ENCODE measurements at regions of chr9 and their contacts with region 1.

Region 1: DNA sequence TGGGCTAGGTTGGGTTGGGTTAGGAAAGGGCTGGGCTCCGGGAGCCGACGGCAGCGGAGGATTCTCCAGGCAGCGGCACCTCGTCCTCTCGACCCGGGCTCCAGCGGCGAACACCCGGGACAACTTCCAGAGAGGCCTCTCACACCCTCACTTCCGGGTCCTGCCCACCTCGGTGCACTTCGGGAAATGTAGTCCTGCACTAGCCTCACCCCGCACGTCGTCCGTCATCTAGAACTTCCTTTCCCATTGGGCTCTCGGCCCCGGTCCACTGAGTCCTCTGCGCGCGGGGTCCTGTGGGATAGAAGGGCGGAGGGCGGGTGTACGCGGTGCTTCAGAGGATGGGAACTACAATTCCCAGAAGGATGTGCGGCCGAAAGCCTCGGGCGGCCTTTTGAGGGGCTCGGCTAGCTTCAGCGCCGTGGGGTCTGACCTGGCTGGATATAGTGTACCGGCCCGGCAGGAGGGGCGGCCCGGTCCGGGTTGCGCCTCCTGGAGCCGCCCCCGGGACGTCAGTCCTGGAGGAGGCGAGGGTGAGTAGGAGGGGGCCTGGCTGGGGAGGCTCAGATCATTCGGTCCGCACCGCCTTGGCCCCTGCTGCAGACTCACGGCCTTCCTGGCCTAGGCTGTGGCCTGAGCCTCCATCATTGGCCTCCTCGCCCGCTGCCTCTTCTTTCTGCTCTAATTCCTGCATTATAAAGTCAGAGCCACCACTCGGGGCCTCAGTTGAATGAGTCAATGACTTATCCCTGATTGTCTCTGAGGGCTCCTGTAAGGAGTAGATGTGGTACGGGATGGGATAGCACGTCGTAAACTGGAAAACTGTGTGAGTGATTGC is at the starts of genes ERP44 and INVS:
- DNase-seq: peak; percentile 99
- H3K4me3 ChIP-seq: peak within 1 kb of the TSS; percentile 97
- H3K27ac ChIP-seq: peak within 1 kb of the TSS; percentile 71
- H3K4me1 ChIP-seq: peaks cover 34% of the 10 kb centered on the region
- CTCF ChIP-seq: no peak
- total RNA-seq, gene ERP44: 15.0 and 19.3 TPM in 2 replicates
- total RNA-seq, gene INVS: 30.7 and 33.1 TPM in 2 replicates

Region 2: DNA sequence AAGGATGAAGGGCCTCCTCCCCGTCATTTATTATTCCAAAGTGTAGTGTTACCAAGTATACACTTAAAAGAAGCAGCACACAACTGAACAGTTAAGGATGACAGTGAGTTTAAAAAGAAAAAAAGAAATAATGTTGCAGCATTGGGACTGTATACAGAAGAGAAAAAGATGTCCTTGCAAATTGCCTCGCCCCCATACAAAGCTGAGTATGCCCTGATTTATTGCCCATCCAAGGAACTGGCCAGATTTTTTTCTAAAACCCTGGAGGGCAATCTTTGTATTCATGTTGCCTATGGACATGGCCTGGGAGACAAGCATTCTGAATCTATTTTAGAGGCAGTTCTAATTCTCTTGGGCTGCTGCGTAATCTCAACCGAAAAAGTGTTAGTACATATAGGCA is 460.1 kb before region 1 on chr9:
- CTCF ChIA-PET with region 1: no interaction called
- POLR2A ChIA-PET with region 1: no interaction called
- intact Hi-C with region 1: no loop called
- DNase-seq: no peak
- H3K4me3 ChIP-seq: no peak overlapping the region
- H3K27ac ChIP-seq: no peak overlapping the region
- H3K4me1 ChIP-seq: no peaks in the 10 kb centered on the region
- CTCF ChIP-seq: no peak

Region 3: DNA sequence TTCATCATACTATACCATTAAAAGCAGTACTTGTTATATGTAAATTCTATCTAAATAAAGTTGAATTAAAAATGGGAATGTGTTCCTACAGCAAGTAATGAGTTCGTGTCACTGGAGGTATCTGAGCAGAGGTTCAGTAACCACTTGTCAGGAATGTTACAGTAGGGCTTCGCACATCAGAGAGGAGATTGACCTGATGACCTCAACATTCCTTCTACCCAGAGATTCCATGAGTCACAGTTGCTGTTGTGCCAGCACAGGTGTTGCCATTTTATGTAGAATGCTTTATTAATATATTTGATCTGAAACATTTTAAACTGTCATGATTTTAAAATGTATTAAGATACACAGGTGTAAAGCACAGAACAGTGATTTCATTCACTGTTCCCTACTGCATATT is 132.4 kb before region 1 on chr9:
- CTCF ChIA-PET with region 1: no interaction called
- POLR2A ChIA-PET with region 1: no interaction called
- intact Hi-C with region 1: no loop called
- DNase-seq: no peak
- H3K4me3 ChIP-seq: no peak overlapping the region
- H3K27ac ChIP-seq: no peak overlapping the region
- H3K4me1 ChIP-seq: no peaks in the 10 kb centered on the region
- CTCF ChIP-seq: no peak

Region 4: DNA sequence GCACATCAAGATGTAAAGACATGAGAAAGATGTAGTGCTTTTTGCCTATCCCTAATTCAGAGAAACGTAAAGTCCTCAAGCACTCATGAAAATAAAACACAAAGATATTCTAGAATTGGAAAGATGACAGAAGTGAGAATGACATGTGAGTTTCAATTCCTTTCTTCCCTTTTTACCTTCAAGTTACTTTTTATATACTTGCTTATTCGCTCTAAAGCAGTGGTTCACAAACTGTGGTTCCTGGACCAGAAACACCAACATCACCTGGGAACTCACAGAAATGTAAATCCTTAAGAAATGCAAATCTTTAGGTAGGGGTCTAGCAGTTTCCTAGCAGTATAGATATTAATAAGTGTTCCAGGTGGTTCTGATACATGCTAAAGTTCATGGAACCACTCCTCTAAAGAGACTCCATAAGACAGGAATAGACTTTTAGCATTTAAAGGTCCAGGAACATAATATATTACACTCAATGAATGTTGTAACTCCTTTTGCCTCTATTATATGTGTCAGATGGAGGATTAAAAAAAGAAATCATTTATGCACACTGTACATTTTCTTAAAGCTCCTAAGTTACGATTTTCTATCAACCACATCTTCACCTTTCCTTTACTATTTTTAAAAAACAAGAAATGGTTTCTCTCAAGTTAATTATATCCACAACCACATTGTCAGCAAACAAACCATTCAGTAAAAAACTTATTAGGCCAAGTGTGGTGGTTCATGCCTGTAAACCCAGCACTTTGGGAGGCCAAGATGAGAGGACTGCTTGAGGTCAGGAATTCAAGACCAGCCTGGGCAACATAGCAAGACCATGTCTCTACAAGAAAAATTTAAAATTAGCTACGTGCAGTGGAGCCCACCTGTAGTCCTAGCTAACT is 40.2 kb before region 1 on chr9:
- CTCF ChIA-PET with region 1: no interaction called
- POLR2A ChIA-PET with region 1: interaction called, 13 read pairs
- intact Hi-C with region 1: loop called (anchors 5 kb)
- DNase-seq: peak; percentile 93
- H3K4me3 ChIP-seq: peak overlapping the region; percentile 39
- H3K27ac ChIP-seq: peak overlapping the region; percentile 98
- H3K4me1 ChIP-seq: peaks cover 64% of the 10 kb centered on the region
- CTCF ChIP-seq: no peak

Region 5: DNA sequence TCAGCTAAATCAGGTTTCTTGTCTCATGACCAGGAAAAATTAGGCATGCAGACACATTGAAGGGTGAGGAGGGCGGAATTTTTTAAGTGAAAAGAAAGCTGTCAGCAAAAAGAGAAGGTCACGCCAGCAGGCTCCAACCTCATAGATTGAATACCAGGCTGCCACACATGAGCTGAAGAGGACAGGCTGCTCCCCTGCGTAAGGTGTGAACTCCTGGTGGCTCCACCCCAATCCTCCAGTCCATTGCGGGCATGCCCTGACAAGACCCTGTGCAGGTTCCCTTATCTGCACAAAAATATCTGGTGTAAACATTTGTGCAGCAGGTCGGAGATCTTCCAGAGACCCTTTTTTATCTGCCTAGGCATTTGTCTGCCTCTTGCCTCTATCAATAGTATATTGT is 276.6 kb after region 1 on chr9:
- CTCF ChIA-PET with region 1: no interaction called
- POLR2A ChIA-PET with region 1: no interaction called
- intact Hi-C with region 1: no loop called
- DNase-seq: no peak
- H3K4me3 ChIP-seq: no peak overlapping the region
- H3K27ac ChIP-seq: no peak overlapping the region
- H3K4me1 ChIP-seq: no peaks in the 10 kb centered on the region
- CTCF ChIP-seq: no peak

Measured in OCI-LY7 (cell line).